Right ventricle myocardium inferior (tissue), 1 donor: ENCODE measurements at regions of chr21 and their contacts with region 1.

Region 1: DNA sequence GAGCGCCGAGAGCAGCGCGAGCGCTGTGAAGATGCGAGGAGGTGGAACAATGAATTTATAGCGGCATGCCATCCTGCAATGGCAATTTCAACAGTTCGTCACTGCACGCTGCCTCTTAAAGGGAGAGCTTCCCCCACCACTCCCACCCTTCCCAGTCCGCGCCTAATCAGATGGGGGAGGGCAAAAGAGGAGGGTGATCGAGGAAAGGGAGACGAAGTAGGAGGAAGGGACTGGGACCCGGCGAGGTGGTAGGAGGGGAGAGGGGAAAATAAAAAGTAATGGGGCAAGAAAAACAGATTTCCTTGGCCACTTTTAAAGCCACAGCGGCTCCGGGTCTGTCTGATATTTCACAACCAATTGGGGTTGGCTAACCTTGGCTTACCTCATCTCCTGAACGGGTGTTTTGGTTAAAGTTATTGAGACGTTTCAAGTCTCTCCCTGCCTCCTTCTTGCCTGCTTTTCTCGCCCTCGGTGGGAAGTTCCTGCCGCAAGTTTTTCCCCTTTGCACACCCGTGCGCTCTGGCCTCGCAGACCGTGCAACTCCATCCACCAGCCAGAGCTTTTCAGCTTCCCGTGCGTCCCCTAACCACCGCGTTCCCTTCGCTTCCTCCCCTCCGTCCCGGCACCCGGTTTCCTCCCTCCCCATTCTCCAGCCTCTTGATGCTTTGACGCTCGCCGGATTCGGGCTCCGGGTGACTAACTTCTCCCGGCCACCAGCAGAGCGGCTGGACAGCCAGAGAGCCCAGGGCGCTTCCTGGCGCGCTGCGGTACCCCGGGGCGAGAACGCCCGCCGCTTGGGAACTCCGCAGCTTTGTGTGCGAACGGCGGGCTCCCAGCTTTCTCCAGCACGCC is at the start of gene ADAMTS5:
- DNase-seq: peak; percentile 81
- ATAC-seq: peak; percentile 45
- total RNA-seq, gene ADAMTS5: 3.6 TPM

Region 2: DNA sequence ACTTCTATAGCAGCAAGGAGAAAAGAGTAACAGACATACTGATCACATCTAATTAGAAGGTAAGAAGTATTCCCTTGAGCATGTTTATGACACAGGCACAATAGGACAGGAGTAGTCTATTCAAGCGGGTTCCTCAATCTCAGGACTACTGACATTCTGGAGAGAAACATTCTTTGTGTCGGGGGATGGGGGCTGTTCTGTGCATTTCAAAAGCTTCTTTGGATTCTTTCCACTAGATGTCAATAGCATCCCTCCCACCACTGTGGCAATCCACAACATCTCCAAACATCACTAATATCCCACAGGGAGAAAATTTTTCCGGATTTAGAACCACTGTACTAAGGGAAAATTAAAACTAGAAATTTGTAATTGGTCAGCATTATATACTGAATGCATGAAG is 57.3 kb before region 1 on chr21:
- intact Hi-C with region 1: no loop called
- DNase-seq: no peak
- ATAC-seq: no peak

Region 3: DNA sequence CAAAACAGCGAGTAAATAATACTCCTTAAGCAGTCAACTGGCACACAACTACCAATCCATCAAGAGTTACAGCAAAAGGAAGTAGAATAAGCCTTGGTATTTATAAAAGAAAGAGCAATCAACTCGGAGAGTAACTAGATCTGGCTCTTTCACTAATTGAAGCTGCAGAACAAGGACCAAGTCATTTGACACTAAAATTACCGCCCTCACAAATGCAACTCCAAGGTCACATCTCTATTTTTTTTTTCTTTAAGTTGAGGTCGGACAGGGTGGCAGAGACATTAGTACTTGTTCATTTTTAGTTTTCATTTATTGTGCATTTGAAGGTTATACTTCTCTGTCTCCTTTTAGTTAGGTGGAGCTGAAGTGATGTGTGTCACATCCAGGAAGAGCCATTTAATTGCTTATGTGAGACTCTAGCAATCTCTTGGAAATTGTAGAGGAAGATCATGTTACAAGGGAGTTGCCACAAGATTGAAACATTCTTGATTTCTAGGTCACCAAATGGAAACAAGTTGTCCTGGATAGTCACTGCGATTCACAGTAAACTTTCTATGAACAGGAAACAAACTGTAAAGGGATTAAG is 137.7 kb after region 1 on chr21:
- intact Hi-C with region 1: loop called (anchors 10 kb)
- DNase-seq: no peak
- ATAC-seq: no peak